PC-9 (cell line): ENCODE measurements at regions of chr1 and their contacts with region 1.

Region 1: DNA sequence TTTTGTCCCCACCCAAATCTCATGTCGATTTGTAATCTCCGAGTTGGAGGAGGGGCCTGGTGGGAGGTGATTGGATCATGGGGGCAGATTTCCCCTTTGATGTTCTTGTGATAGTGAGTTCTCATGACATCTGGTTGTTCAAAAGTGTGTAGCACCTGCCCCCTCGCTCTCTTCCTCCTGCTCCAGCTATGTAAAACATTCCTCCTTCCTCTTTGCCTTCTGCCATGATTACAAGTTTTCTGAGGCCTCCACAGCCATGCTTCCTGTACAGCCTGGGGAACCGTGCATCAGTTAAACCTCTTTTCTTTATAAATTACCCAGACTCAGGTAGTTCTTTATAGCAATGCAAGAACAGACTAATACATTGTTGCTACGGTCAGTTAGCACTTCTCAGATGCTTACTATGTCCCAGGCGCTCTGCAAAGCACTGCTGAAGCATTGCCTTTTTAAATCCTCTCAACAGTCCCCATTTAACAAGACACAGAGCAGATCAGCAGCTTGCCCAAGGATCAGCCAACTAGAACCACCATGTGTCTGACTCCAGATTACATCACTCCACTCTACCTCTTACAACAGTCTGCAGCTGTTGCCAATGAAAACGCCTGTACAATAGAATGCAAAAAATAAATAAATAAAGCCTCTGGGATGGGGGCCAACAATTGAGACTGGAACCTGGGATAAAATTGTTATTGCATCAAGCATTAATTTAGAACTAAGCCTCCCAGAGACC is 52.4 kb upstream of the USP1 start:
- DNase-seq: peak in 1 of 2 experiments; percentile 61
- H3K4me3 ChIP-seq: no peak overlapping the region
- H3K27ac ChIP-seq: no peak overlapping the region
- H3K4me1 ChIP-seq: peaks cover 38% of the 10 kb centered on the region
- H3K27me3 ChIP-seq: no peaks in the 10 kb centered on the region
- CTCF ChIP-seq: no peak

Region 2: DNA sequence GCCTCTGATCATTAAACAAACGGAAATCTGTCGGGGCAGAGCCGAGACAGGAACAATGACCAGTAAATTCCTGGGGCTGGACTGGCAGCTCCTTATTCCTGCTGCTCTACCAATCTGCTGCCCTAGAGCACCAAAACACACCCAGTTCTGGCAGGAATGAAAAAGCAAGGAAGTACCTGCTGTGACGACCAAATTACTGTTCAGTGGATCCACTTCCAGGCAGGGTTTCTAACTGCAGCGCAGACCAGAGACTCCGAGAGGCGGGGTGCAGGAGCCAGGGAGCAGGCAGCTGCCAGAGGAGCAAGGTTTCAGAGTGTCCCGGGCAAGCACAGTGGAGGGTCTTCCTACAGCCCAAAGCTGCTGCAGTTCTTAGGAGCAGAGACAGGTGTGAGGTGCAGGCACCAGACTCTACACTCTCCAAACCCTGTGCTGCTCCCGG is 97.6 kb before region 1 on chr1:
- CTCF ChIA-PET with region 1: no interaction called
- POLR2A ChIA-PET with region 1: no interaction called
- intact Hi-C with region 1: loop called (anchors 5 kb)
- DNase-seq: peak; percentile 39 to 65
- H3K4me3 ChIP-seq: no peak overlapping the region
- H3K27ac ChIP-seq: no peak overlapping the region
- H3K4me1 ChIP-seq: peaks cover 18% of the 10 kb centered on the region; the same call in 1 of the 2 replicates
- H3K27me3 ChIP-seq: no peaks in the 10 kb centered on the region
- CTCF ChIP-seq: no peak

Region 3: DNA sequence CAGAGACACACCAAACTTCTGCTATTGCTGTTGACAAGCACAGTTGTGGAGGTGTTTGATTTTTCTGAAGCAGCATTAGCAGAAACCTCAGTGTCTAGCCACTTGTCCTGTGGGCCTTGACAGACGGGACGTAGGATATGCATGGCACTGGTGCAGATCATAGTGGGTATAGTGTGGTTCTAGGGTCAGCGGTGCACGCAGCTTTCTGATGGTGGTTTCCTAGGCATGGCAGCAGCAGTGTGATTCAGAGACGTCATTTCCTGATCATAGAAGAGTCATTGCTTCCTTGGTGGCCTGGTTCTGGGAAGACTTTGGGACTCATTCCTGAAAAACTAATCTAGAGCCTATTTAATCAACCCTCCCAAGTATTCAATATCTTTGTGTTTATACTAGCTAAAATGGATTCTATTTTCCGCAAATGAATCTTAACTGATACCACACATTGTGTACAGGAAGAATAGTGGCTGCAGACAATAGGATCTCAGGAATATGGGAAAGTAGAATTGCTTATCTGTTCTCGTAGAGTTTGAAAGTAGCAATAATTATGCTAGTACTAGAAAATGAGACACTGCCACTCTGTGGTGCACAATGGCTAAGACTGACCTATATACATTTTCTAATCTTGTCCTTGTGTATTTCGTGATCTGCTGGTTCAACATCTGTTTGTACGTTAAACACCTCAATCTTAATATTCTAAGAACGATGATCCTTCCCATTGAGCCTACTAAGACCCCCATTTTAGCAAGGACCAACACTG is 49.6 kb after region 1 on chr1:
- CTCF ChIA-PET with region 1: no interaction called
- POLR2A ChIA-PET with region 1: no interaction called
- intact Hi-C with region 1: no loop called
- DNase-seq: no peak
- H3K4me3 ChIP-seq: no peak overlapping the region
- H3K27ac ChIP-seq: no peak overlapping the region
- H3K4me1 ChIP-seq: peaks cover 13% of the 10 kb centered on the region
- H3K27me3 ChIP-seq: no peaks in the 10 kb centered on the region
- CTCF ChIP-seq: no peak; the same call in 1 of the 2 replicates